Activated T-helper 1 cell treated with anti-CD3 and anti-CD28 coated beads, Interleukin-12 subunit alpha, Interleukin-12 subunit beta, Interleukin-2, Interleukin-4 antibody, amounts not matched to agents 30 ng/mL and 10 ng/mL and 1 ng/mL, durations not matched to agents 14 hours and 24 hours and 36 hours (primary cell): ENCODE measurements at regions of chr5 and their contacts with region 1.

Region 1: DNA sequence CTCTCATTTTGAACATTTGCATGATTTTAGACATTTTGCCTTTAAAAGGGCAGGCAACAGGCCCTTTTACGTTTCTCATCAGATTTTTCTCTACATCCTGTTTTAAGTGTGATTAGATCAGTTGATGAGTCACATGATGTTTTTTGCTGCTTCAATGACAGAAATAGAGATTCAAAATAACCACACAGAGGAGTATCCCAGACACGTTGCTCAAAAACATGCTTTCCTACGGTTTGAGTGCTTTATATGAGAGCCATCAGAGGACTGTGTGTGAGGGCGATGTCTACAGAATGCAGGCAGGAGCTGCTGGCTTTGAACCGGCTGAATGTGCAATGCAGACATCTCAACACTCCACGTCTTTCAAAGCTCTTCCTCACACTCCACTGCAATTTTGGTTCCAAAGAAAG is 42.1 kb downstream of the OTULIN start:
- DNase-seq: peak; percentile 48
- H3K4me3 Mint-ChIP-seq: peak overlapping the region; percentile 87
- H3K27ac Mint-ChIP-seq: peak overlapping the region; percentile 99
- H3K4me1 Mint-ChIP-seq: peaks cover 75% of the 10 kb centered on the region
- H3K27me3 Mint-ChIP-seq: no peaks in the 10 kb centered on the region

Region 2: DNA sequence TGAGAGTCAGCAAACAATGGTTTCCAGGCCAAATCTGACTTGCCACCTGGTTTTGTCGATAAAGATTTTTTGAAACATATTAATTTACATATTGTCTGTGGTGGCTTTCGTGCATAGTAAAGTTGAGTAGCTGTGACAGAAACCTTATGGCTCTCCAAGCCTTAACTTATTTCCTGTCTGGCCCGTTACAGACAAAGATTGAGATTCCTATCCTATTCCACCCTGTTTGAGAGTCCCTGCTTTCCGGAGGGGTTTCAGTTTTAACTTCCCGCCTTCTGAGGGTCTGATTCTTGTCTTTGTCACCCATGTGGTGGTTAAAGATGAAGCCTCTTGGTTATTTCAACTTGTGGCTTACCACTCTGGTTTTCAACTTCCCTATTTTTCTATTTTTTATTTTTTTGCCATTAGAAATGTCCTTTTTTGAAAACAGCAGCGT is 30.7 kb before region 1 on chr5:
- intact Hi-C with region 1: loop called (anchors 1 kb)
- DNase-seq: no peak
- H3K4me3 Mint-ChIP-seq: peak overlapping the region; percentile 46
- H3K27ac Mint-ChIP-seq: peak overlapping the region; percentile 82
- H3K4me1 Mint-ChIP-seq: peaks cover 69% of the 10 kb centered on the region
- H3K27me3 Mint-ChIP-seq: no peaks in the 10 kb centered on the region

Region 3: DNA sequence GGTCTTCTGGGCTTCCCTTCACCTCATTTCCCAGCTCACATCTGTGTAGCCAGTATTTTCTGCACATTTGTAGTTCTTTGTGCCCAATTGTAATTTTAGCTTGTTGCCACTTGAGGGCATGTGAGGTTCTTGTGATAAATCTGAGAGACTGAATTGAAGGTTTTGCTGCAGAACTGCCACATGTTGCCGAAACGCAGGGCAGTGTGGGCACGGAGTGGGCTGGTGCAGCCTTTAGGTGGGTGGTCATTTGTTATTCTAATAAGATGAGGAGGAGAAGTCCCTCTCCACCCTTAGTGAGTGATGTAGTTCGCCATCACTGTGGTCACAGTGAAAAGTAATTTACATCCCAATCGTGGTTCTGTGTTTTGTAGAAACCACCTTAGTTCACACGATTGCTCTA is 20.9 kb before region 1 on chr5:
- intact Hi-C with region 1: loop called (anchors 1 kb)
- DNase-seq: no peak
- H3K4me3 Mint-ChIP-seq: no peak overlapping the region
- H3K27ac Mint-ChIP-seq: peak overlapping the region; percentile 93
- H3K4me1 Mint-ChIP-seq: peaks cover 38% of the 10 kb centered on the region
- H3K27me3 Mint-ChIP-seq: no peaks in the 10 kb centered on the region

Region 4: DNA sequence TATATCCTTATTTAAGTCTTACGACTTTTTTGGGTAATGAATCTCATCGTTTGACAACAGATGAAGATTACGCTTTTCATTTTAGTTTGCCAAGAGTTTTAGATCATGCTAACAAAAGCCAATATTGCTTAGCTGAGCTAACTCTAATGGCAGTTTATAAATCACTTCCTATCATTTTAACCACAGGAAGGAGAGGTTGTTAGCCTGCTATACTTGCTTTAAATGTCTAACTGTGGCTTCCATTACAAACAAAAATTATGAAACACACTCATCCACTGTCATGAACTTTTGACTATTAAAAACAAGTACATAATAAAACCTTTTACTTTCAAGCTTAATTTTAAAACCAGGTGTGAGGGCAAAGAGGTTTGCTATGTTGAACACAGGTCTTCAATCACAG is 218.7 kb after region 1 on chr5:
- intact Hi-C with region 1: loop called (anchors 5 kb)
- DNase-seq: no peak
- H3K4me3 Mint-ChIP-seq: peak overlapping the region; percentile 15
- H3K27ac Mint-ChIP-seq: peak overlapping the region; percentile 78
- H3K4me1 Mint-ChIP-seq: peaks cover 58% of the 10 kb centered on the region
- H3K27me3 Mint-ChIP-seq: peaks cover 2% of the 10 kb centered on the region

Region 5: GRCh38 chr5:14996997-14997396 is 290.4 kb after region 1 on chr5:
- intact Hi-C with region 1: loop called (anchors 2 kb)
- DNase-seq: no peak
- H3K4me3 Mint-ChIP-seq: no peak overlapping the region
- H3K27ac Mint-ChIP-seq: no peak overlapping the region
- H3K4me1 Mint-ChIP-seq: peaks cover 38% of the 10 kb centered on the region
- H3K27me3 Mint-ChIP-seq: peaks cover 2% of the 10 kb centered on the region

Region 6: DNA sequence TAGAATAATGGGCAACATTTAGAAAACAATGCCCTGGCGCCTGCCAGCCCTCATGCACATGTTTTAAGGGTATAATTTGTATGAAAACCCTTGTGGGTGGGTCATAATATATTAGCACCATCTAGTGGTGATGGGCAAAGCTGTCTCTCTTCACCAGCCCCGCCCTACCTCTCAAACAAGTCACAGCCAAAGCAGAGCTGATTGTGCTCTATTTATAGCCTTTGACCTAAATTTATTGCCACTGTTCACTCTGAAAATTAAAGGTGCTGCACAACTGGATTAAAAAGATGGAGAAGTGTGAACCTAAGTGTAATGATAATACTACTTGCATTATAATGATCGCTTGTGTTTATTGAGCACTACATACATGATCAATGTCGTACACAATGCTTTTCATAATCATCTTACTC is 296.9 kb after region 1 on chr5:
- intact Hi-C with region 1: loop called (anchors 1 kb)
- DNase-seq: peak; percentile 33
- H3K4me3 Mint-ChIP-seq: no peak overlapping the region
- H3K27ac Mint-ChIP-seq: no peak overlapping the region
- H3K4me1 Mint-ChIP-seq: peaks cover 20% of the 10 kb centered on the region
- H3K27me3 Mint-ChIP-seq: peaks cover 28% of the 10 kb centered on the region

Region 7: GRCh38 chr5:16465544-16466466 is 1759.2 kb after region 1 on chr5 and contains the start of gene ZNF622:
- intact Hi-C with region 1: loop called (anchors 10 kb)
- DNase-seq: peak; percentile 86
- H3K4me3 Mint-ChIP-seq: peak within 1 kb of the TSS; percentile 99
- H3K27ac Mint-ChIP-seq: peak within 1 kb of the TSS; percentile 95
- H3K4me1 Mint-ChIP-seq: peaks cover 66% of the 10 kb centered on the region
- H3K27me3 Mint-ChIP-seq: no peaks in the 10 kb centered on the region
- total RNA-seq, gene ZNF622: 54.4 and 55.6 TPM in 2 replicates